A549 (cell line): ENCODE measurements at regions of chr13 and their contacts with region 1.

Region 1: GRCh38 chr13:31424117-31424729 is 224.4 kb downstream of the B3GLCT start:
- DNase-seq: peak; percentile 60 to 75
- ATAC-seq: peak; percentile 99 to 100
- H3K4me3 ChIP-seq: no peak overlapping the region
- H3K27ac ChIP-seq: no peak overlapping the region
- H3K4me1 ChIP-seq: no peaks in the 10 kb centered on the region
- CTCF ChIP-seq: peak; percentile 64
- EP300 ChIP-seq: no peak
- POLR2A ChIP-seq: no peak
- RAD21 ChIP-seq: peak; percentile 73 to 84

Region 2: DNA sequence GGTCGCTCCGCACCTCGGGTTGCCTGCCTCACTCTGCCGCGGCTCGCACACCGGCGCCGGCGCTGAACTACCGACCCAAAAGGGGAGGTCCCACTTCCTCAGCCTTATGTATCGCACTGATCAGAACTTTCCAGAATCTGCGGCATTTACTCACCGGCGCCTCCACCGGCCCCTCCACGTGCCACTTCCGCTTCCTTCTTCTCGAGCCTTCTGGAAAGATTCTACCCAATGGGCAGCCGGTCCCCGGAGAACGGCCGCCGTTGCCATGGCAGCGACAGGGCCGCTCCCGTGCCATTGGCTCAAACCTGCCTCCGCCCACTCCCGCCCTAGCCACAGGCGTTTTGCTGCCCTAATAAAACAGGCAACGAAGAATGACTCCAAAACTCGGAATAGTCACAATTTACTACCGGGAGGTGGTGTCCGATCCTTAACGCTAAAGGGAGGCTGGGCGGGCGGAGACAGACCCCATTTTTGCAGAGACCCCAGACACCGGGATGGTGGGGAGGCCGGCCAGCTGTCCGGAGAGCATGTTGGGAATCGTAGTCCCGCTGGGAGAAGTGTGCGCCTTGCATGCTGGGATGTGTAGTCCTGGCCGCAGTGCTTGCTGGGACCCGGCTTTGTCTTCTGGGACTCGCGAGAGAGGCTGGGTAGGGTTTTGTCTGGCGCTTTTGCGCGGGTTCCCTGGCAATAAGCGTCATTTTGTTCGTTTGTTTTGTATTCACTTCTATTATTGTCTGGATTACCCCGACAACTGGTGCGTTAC is 262.2 kb before region 1 on chr13 and contains the start of gene HSPH1:
- CTCF ChIA-PET with region 1: no interaction called
- POLR2A ChIA-PET with region 1: no interaction called
- DNase-seq: peak; percentile 84 to 96
- ATAC-seq: peak; percentile 96
- H3K4me3 ChIP-seq: peak within 1 kb of the TSS; percentile 84
- H3K27ac ChIP-seq: peak within 1 kb of the TSS; percentile 85 to 97
- H3K4me1 ChIP-seq: peaks cover 39% of the 10 kb centered on the region
- CTCF ChIP-seq: no peak
- EP300 ChIP-seq: no peak
- POLR2A ChIP-seq: peak; percentile 99
- RAD21 ChIP-seq: no peak
- polyA plus RNA-seq, gene HSPH1: 98.9 and 141 TPM in 2 replicates

Region 3: DNA sequence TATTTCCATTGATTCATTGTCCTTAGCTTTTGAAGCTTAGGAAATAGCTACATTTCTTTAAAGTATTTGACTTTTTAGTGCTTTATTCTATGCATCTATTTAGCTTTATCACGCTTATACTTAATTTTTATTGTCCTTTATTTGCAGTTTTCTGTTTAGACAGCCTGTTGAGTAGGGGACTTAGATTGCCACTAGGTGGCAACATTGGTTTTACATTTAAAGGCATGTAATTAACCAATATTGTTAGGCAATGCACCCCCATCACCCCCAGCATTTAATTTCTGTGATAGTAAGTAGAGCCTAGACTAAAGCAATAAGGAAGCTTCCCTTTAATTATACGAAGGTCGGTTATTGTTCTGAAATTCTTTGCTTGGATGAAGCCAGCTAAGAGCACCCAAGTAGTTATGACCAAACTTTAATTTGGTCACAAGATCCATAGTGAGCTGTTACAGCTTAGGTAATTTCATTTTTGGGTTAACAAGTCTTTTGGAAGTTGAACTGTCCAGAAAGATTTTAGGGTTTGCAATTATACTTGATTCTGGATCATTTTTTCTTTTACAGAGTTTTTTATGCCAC is 187.9 kb before region 1 on chr13:
- CTCF ChIA-PET with region 1: interaction called, 101 read pairs
- POLR2A ChIA-PET with region 1: no interaction called
- DNase-seq: peak in 1 of 2 experiments; percentile 26
- ATAC-seq: peak in 1 of 2 experiments; percentile 66; a peak in 3 of 6 replicates
- H3K4me3 ChIP-seq: no peak overlapping the region
- H3K27ac ChIP-seq: no peak overlapping the region
- H3K4me1 ChIP-seq: no peaks in the 10 kb centered on the region
- CTCF ChIP-seq: peak; percentile 62
- EP300 ChIP-seq: no peak
- POLR2A ChIP-seq: no peak
- RAD21 ChIP-seq: peak; percentile 64

Region 4: DNA sequence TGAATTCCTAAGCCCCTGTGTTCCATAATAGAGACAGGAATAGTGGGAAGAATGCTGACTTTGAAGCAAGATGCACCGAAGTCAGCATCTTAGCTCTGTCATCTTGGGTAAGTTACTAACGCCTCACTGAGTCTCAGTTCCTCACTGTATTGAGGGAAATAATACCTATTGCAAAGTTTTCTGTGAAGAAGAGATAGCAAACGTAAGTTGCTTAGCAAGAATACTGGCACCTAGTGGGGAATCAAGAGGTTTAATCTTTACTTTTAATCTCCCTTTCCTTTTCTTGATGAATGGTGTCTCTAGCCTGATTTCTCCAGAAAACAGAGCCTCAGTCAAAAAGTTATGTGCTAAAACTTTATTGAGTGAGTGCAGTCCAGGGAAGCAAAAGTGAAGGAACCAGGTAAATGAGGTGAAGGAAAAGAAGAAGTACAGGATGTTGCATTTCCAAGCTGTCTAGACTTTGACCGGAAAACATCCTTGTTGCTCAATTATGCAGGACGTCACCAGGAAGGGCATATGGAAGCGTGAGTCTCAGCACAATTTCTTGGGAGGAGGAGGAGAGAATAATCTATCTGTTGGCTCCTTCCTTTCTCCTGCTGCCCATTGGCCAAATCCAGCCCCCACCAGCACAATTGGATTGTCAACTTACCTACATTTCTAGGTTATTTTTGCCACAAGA is 14.4 kb before region 1 on chr13:
- CTCF ChIA-PET with region 1: interaction called, 11 read pairs
- POLR2A ChIA-PET with region 1: no interaction called
- DNase-seq: no peak
- ATAC-seq: no peak
- H3K4me3 ChIP-seq: no peak overlapping the region
- H3K27ac ChIP-seq: no peak overlapping the region
- H3K4me1 ChIP-seq: no peaks in the 10 kb centered on the region
- CTCF ChIP-seq: no peak
- EP300 ChIP-seq: no peak
- POLR2A ChIP-seq: no peak
- RAD21 ChIP-seq: no peak

Region 5: DNA sequence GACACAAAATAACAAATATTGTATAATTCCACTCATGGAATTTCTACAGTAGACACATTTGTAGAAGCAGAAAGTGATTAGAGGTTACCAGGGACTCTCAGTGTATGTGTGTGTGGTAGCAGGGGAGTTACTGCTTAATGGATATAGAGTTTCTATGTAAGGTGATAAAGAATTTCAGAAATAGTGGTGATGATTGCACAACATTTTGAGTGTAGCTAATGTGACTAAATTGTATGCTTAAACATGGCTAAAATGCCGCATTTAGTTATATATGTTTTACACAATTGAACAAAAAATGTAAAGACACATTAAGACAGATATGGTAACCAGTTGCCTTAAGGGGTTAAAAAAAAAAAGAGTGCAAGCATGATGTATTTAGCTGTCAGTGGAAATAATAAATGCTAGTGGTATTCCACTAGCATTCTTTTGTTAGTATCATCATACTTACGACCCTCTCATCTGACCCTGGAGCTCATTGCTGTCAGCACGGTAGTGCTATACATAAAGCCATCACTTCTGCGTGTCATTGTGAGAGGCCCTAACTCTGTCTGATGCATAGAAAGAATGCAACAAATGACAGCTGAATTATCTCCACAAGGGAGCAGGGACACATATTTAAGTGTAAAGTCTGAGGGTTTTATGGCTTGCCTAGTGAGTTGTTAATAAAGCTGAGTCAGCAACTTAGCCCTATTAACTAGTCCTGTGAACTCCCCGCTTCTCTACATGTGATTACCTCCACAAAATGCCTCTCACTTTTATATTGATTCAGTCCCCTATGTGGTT is 181.0 kb after region 1 on chr13:
- CTCF ChIA-PET with region 1: no interaction called
- POLR2A ChIA-PET with region 1: no interaction called
- DNase-seq: no peak
- ATAC-seq: no peak
- H3K4me3 ChIP-seq: no peak overlapping the region
- H3K27ac ChIP-seq: no peak overlapping the region
- H3K4me1 ChIP-seq: no peaks in the 10 kb centered on the region
- CTCF ChIP-seq: no peak
- EP300 ChIP-seq: no peak
- POLR2A ChIP-seq: no peak
- RAD21 ChIP-seq: no peak